Psoas muscle (tissue), 8 donors: ENCODE measurements at regions of chr7 and their contacts with region 1.

Region 1: GRCh38 chr7:74173866-74174605 is at the start of gene EIF4H:
- DNase-seq: peak; percentile 97 to 98
- ATAC-seq: peak; percentile 95 to 97 (median 96)
- H3K4me3 ChIP-seq: peak within 1 kb of the TSS; percentile 96
- H3K27ac ChIP-seq: peak within 1 kb of the TSS; percentile 97
- H3K4me1 ChIP-seq: peaks cover 44% of the 10 kb centered on the region
- H3K27me3 ChIP-seq: no peaks in the 10 kb centered on the region
- CTCF ChIP-seq: no peak
- total RNA-seq, gene EIF4H: 223 to 327 (median 284) TPM

Region 2: GRCh38 chr7:73865738-73866445 is 308.1 kb before region 1 on chr7:
- intact Hi-C with region 1: no loop called
- DNase-seq: peak; percentile 51 to 69
- ATAC-seq: peak; percentile 68 to 90 (median 77)
- H3K4me3 ChIP-seq: no peak overlapping the region
- H3K27ac ChIP-seq: no peak overlapping the region
- H3K4me1 ChIP-seq: no peaks in the 10 kb centered on the region
- H3K27me3 ChIP-seq: no peaks in the 10 kb centered on the region
- CTCF ChIP-seq: peak; percentile 64

Region 3: GRCh38 chr7:74104703-74105102 is 69.3 kb before region 1 on chr7:
- intact Hi-C with region 1: loop called in 1 of 2 experiments (anchors 5 kb)
- DNase-seq: peak in 1 of 2 donors; percentile 53
- ATAC-seq: peak; percentile 86 to 95 (median 90)
- H3K4me3 ChIP-seq: no peak overlapping the region
- H3K27ac ChIP-seq: peak overlapping the region; percentile 70
- H3K4me1 ChIP-seq: peaks cover 5% of the 10 kb centered on the region
- H3K27me3 ChIP-seq: no peaks in the 10 kb centered on the region
- CTCF ChIP-seq: no peak